Dorsolateral prefrontal cortex (tissue), 120 donors: ENCODE measurements at regions of chrX and their contacts with region 1.

Region 1: GRCh38 chrX:68828740-68829552 is at the start of gene EFNB1:
- DNase-seq: peak; percentile 74 to 93 (median 90)
- H3K4me3 ChIP-seq: peak within 1 kb of the TSS; percentile 42 to 79 (median 67)
- H3K27ac ChIP-seq: peak within 1 kb of the TSS in 35 of 59 donors; percentile 0 to 82 (median 46)
- H3K27me3 ChIP-seq: peaks cover 0 to 96% (median 28%) of the 10 kb centered on the region in 45 donors
- CTCF ChIP-seq: peak in 15 of 56 donors; percentile 12 to 40 (median 24)
- total RNA-seq, gene EFNB1: 3.0 to 12.4 (median 6.2) TPM

Region 2: DNA sequence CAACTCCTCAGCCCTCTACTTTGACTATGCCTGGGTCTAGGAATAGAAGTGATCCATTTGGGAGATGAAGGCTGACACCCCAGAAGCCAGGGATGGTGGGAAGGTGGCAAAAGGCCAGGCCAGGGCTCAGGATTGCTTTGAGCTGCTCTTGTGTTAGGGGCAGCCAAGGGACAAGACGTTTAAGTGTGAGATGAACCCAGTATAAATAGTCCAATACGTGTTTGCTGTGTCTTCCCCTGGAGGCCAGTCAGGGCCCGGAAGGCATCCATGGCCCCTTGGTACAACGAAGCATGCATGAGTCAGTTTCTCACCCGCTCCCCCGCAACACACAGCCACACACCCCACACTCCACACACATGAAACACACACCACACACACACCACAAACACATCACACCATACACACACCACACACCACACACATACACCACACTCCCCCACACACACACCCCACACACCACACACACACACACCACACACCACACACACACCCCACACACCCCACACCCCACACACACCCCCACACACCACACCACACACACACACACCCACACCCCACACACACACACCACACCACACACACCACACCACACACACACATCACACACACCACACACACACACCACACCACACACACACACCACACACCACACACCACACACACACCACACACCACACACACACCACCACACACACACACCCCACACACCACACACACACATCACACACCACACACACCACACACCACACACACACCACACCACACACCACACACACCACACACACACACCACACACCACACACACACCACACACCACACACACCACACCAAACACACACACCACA is 176.4 kb before region 1 on chrX:
- intact Hi-C with region 1: no loop called
- DNase-seq: no peak
- H3K4me3 ChIP-seq: no peak overlapping the region
- H3K27ac ChIP-seq: no peak overlapping the region
- H3K27me3 ChIP-seq: peaks cover 0 to 70% (median 31%) of the 10 kb centered on the region in 45 donors
- CTCF ChIP-seq: no peak

Region 3: GRCh38 chrX:68894513-68895340 is 65.8 kb after region 1 on chrX:
- intact Hi-C with region 1: loop called (anchors 2 to 5 kb)
- DNase-seq: peak; percentile 28 to 70 (median 61)
- H3K4me3 ChIP-seq: peak overlapping the region in 55 of 59 donors; percentile 3 to 60 (median 38)
- H3K27ac ChIP-seq: peak overlapping the region in 58 of 59 donors; percentile 33 to 91 (median 79)
- H3K27me3 ChIP-seq: peaks cover 0 to 55% (median 13%) of the 10 kb centered on the region in 45 donors
- CTCF ChIP-seq: no peak

Region 4: DNA sequence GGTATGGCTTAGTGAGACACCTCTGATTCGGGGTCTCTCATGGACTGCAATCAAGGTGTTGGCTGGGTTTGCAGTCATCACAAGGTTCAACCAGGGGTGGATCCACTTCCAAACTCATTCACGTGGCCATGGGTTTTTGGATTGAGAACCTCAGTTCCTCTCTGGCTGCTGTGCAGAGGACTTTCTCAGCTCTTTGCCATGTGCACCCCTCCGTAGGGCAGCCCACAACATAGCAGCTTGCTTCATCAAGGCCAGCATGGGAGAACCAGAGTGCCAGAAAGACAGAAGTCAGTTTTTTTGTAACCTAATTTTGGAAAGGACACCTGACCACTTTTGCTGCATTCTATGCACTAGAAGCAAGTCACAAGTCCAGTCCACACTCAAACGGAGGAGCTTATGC is 181.4 kb after region 1 on chrX:
- intact Hi-C with region 1: no loop called
- DNase-seq: no peak
- H3K4me3 ChIP-seq: no peak overlapping the region
- H3K27ac ChIP-seq: no peak overlapping the region
- H3K27me3 ChIP-seq: peaks cover 0 to 67% (median 11%) of the 10 kb centered on the region in 45 donors
- CTCF ChIP-seq: no peak

Region 5: DNA sequence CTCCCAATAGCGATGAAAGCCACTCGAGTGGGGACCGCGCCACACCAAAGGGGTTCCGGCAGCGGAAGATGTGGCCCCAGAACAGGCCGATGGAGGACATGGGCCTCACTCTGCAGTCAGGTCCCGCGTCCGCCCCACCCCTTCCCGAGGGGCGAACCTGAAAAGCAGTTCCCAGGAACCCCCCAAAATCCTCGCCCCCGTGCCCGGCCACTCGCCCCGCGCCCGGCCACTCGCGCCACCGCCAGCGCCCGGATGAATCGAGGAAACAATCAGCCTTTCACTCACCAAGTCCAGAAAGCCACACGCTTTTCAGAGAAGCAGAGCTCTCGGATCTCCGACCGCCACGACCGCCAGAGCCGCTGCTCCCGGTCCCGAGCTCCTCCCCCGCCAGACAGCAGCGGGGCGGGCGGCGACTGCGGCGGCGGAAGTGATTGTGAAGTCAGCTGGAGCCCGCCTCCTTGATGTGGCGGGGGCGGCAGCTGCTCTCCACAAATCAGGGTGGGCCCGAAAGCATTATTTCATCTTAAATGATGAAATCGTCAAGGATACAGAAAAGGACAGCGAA is 336.2 kb after region 1 on chrX and contains the start of gene PJA1:
- intact Hi-C with region 1: loop called (anchors 2 kb)
- DNase-seq: peak; percentile 54 to 83 (median 74)
- H3K4me3 ChIP-seq: peak within 1 kb of the TSS; percentile 51 to 81 (median 67)
- H3K27ac ChIP-seq: peak within 1 kb of the TSS; percentile 27 to 92 (median 83)
- H3K27me3 ChIP-seq: peaks cover 0 to 50% (median 8%) of the 10 kb centered on the region in 45 donors
- CTCF ChIP-seq: peak in 11 of 56 donors; percentile 2 to 26 (median 13)
- total RNA-seq, gene PJA1: 38.6 to 97.7 (median 68.0) TPM

Region 6: GRCh38 chrX:69238114-69238886 is 409.4 kb after region 1 on chrX:
- intact Hi-C with region 1: loop called in 1 of 2 experiments (anchors 5 kb)
- DNase-seq: peak; percentile 59 to 85 (median 74)
- H3K4me3 ChIP-seq: no peak overlapping the region
- H3K27ac ChIP-seq: peak overlapping the region in 4 of 59 donors; percentile 16 to 31 (median 26)
- H3K27me3 ChIP-seq: peaks cover 0 to 73% (median 24%) of the 10 kb centered on the region in 45 donors
- CTCF ChIP-seq: no peak

Region 7: GRCh38 chrX:69387567-69388487 is 558.9 kb after region 1 on chrX:
- intact Hi-C with region 1: loop called (anchors 2 to 5 kb)
- DNase-seq: peak in 8 of 10 donors; percentile 18 to 56 (median 28)
- H3K4me3 ChIP-seq: no peak overlapping the region
- H3K27ac ChIP-seq: no peak overlapping the region
- H3K27me3 ChIP-seq: peaks cover 0 to 100% (median 55%) of the 10 kb centered on the region in 45 donors
- CTCF ChIP-seq: peak in 55 of 56 donors; percentile 16 to 77 (median 64)